ENCODE measurements at regions of chr12 and their contacts with region 1.

Region 1: GRCh38 chr12:99658671-99659349 is 11.3 kb downstream of the GARIN6 start:
- DNase-seq: no peak
- ATAC-seq: no peak
- H3K4me3 ChIP-seq: no peak overlapping the region
- H3K27ac ChIP-seq: no peak overlapping the region
- H3K4me1 ChIP-seq: no peaks in the 10 kb centered on the region
- H3K27me3 ChIP-seq: no peaks in the 10 kb centered on the region

Region 2: GRCh38 chr12:99043319-99043914 is 615.4 kb before region 1 on chr12:
- intact Hi-C with region 1: loop called (anchors 5 to 10 kb)
- DNase-seq: peak; percentile 67 to 86
- ATAC-seq: no peak
- H3K4me3 ChIP-seq: no peak overlapping the region
- H3K27ac ChIP-seq: no peak overlapping the region
- H3K4me1 ChIP-seq: no peaks in the 10 kb centered on the region
- H3K27me3 ChIP-seq: no peaks in the 10 kb centered on the region

Region 3: GRCh38 chr12:99695050-99695449 is 36.2 kb after region 1 on chr12:
- intact Hi-C with region 1: no loop called
- DNase-seq: no peak
- ATAC-seq: no peak
- H3K4me3 ChIP-seq: no peak overlapping the region
- H3K27ac ChIP-seq: no peak overlapping the region
- H3K4me1 ChIP-seq: no peaks in the 10 kb centered on the region
- H3K27me3 ChIP-seq: no peaks in the 10 kb centered on the region

Measured in aorta (tissue), 5 donors.